Posterior vena cava (tissue), 2 donors: ENCODE measurements at regions of chr19 and their contacts with region 1.

Region 1: DNA sequence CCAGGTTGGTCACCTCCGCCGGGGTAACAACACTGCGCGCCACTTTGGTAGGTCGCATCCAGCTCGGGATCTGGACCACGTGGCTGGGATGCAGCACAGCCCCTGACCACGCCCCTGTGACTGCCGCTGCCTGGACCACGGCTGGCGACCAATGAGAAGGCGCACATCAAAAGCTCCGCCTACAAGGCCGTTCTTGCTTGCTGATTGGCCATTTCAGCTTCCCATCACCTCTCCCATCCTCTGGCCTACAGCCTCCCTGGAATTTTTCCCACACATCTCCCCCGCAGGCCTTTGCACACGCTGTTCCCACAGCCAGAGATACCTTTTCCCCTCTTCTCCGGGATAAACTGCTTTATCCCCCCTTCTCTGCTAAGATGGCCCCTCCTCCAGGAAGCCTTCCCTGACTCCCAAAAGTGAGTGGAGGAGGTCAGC is 12.5 kb upstream of the MAP1S start:
- DNase-seq: no peak

Region 2: GRCh38 chr19:17772172-17772571 is 65.4 kb after region 1 on chr19:
- intact Hi-C with region 1: loop called in 1 of 2 experiments (anchors 5 kb)
- DNase-seq: no peak